ENCODE measurements at regions of chr17 and their contacts with region 1.

Region 1: DNA sequence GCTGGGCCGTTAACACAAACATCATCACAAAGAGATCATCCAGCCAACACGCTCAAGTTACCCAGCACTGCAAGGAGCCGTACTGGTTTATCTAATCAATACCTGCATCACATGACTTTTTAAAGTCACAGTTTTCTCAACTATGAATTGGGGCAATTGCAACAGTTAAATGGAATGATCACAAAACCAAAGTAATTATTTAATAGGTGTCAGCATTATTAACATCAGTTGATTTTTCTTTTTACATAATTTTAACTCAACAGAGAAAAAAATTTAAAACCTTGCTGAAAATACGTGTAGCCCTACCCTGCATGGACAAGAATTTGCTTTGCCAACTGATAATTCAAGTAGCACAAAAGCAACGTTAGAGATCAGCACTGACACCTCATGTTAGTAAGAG is 95.7 kb upstream of the SOX9 start:
- DNase-seq: no peak
- H3K4me3 ChIP-seq: no peak overlapping the region
- H3K27ac ChIP-seq: no peak overlapping the region
- H3K4me1 ChIP-seq: no peaks in the 10 kb centered on the region
- H3K27me3 ChIP-seq: no peaks in the 10 kb centered on the region
- CTCF ChIP-seq: no peak

Region 2: DNA sequence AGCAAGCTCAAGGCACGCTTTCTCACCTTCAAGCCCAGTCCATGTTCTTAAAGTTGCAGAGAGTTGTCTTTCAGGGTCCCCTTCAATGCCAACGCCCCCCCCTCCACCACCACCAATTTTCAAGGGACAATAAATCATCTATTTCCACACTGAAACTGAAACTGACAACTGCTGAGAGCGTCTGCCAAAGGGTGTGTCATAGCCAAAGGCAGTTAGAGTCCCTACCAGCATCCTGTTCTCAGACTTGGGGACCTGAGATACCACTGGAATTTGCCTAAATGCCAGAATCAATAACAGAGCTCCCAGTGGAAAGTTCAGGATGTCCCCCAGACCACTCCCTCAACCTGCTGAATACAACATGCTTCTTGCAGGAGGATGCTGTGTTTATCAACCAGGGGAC is 37.5 kb before region 1 on chr17:
- CTCF ChIA-PET with region 1: no interaction called
- dilution Hi-C with region 1: no loop called
- in situ Hi-C with region 1: no loop called
- intact Hi-C with region 1: no loop called
- DNase-seq: peak; percentile 62
- H3K4me3 ChIP-seq: no peak overlapping the region
- H3K27ac ChIP-seq: peak overlapping the region; percentile 15
- H3K4me1 ChIP-seq: peaks cover 48% of the 10 kb centered on the region
- H3K27me3 ChIP-seq: no peaks in the 10 kb centered on the region
- CTCF ChIP-seq: no peak

Region 3: DNA sequence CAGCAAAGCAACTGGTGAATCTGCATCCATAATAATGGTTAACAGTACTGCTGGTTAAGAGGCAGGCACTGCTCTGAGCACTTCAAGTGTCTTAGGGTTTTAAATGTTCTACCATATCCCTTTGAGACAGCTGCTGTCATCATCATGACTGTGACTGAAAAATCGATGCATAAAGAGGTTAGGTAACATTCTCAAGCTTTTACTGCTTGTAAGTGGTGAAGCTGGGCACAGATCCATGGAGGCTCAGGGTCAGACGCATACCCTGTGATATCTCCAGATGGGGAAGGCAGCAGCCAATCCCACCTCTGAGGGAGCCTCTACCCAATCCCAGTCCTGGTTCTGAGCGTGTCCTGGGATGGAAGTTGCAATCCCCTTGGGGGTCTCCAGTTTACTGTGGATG is 38.1 kb after region 1 on chr17:
- CTCF ChIA-PET with region 1: no interaction called
- dilution Hi-C with region 1: loop called (anchors 5 kb)
- in situ Hi-C with region 1: no loop called
- intact Hi-C with region 1: no loop called
- DNase-seq: no peak
- H3K4me3 ChIP-seq: no peak overlapping the region
- H3K27ac ChIP-seq: no peak overlapping the region
- H3K4me1 ChIP-seq: peaks cover 15% of the 10 kb centered on the region
- H3K27me3 ChIP-seq: no peaks in the 10 kb centered on the region
- CTCF ChIP-seq: no peak

Region 4: GRCh38 chr17:72090108-72090507 is 65.0 kb after region 1 on chr17:
- CTCF ChIA-PET with region 1: no interaction called
- dilution Hi-C with region 1: no loop called
- in situ Hi-C with region 1: no loop called
- intact Hi-C with region 1: no loop called
- DNase-seq: no peak
- H3K4me3 ChIP-seq: no peak overlapping the region
- H3K27ac ChIP-seq: no peak overlapping the region
- H3K4me1 ChIP-seq: no peaks in the 10 kb centered on the region
- H3K27me3 ChIP-seq: no peaks in the 10 kb centered on the region
- CTCF ChIP-seq: no peak

Region 5: DNA sequence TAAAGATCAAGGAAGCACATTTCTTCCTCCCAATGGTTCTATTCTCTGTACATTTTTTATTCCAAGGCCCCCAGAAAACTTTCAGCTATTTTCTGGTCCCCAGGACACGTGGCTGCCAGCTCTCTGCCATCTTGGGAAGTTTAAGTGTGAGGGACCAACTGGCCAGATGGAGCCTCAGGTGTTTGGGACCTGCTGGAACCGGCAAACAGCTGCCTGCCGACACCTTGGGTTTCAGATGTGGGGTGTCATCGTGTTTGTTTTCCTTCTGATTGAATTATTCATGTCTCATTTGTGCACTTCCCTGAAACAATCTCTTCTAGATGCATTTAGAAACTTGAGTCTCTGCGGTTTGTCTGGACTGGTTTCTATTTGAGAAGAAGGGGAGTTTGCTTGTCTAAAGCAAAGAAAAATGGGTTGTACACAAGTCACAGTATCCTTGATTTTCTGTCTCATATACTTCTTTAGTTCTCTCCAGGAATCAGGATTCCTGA is 680.8 kb after region 1 on chr17:
- CTCF ChIA-PET with region 1: no interaction called
- dilution Hi-C with region 1: no loop called
- in situ Hi-C with region 1: no loop called
- intact Hi-C with region 1: no loop called
- DNase-seq: no peak
- H3K4me3 ChIP-seq: no peak overlapping the region
- H3K27ac ChIP-seq: no peak overlapping the region
- H3K4me1 ChIP-seq: peaks cover 29% of the 10 kb centered on the region
- H3K27me3 ChIP-seq: no peaks in the 10 kb centered on the region
- CTCF ChIP-seq: no peak

Measured in mammary epithelial cell (primary cell).